ENCODE measurements at regions of chr3 and their contacts with region 1.

Region 1: GRCh38 chr3:187738331-187739093 is 6.8 kb downstream of the BCL6 start:
- DNase-seq: peak; percentile 38 to 88 (median 65)
- ATAC-seq: peak; percentile 32
- H3K4me3 ChIP-seq: peak overlapping the region; percentile 88 to 94
- H3K4me3 Mint-ChIP-seq: peak overlapping the region; percentile 94
- H3K27ac ChIP-seq: peak overlapping the region; percentile 44 to 88
- H3K27ac Mint-ChIP-seq: peak overlapping the region; percentile 100
- H3K4me1 ChIP-seq: peaks cover 15% of the 10 kb centered on the region
- H3K4me1 Mint-ChIP-seq: peaks cover 52% of the 10 kb centered on the region
- H3K27me3 ChIP-seq: no peaks in the 10 kb centered on the region
- H3K27me3 Mint-ChIP-seq: no peaks in the 10 kb centered on the region
- CTCF ChIP-seq: peak; percentile 85

Region 2: DNA sequence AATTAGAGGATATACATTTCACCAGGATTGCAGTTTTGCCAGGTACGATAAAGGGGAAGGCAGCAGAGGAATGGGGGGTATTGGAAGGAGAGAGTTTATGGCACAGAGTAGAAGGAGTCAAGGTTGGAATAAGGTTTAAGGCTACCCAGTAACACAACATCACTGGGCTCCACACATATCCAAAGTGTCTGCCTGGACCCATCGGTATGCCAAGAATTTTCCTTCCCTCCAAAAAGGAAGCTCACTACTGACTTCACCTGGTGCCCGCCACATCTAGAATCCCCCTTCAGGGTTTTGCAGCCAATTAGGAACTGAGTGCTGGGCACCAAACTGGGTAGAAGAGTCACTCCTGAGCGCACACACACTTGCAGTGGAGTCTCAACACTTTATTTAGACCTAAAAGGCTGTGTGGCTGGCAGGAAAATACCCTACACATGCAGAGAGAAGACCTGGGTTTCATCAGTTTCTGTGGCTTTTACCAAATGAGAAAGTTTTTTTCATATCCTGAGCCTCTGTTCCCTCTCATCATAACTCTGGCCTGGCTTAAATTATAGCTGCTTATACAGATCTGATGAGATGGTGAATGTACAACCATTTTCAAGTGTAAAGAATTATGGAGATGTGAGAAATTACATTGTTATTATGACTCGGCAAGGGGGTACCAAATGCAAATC is 224.6 kb after region 1 on chr3:
- CTCF ChIA-PET with region 1: interaction called, 10 read pairs
- POLR2A ChIA-PET with region 1: no interaction called
- intact Hi-C with region 1: no loop called
- DNase-seq: peak in 1 of 9 experiments; percentile 18
- ATAC-seq: no peak
- H3K4me3 ChIP-seq: no peak overlapping the region
- H3K4me3 Mint-ChIP-seq: no peak overlapping the region
- H3K27ac ChIP-seq: no peak overlapping the region
- H3K27ac Mint-ChIP-seq: no peak overlapping the region
- H3K4me1 ChIP-seq: peaks cover 22% of the 10 kb centered on the region
- H3K4me1 Mint-ChIP-seq: peaks cover 25% of the 10 kb centered on the region
- H3K27me3 ChIP-seq: no peaks in the 10 kb centered on the region
- H3K27me3 Mint-ChIP-seq: no peaks in the 10 kb centered on the region
- CTCF ChIP-seq: no peak

Region 3: GRCh38 chr3:188279502-188280335 is 541.2 kb after region 1 on chr3:
- CTCF ChIA-PET with region 1: interaction called, 6 read pairs
- POLR2A ChIA-PET with region 1: no interaction called
- intact Hi-C with region 1: loop called (anchors 2 to 5 kb)
- DNase-seq: peak in 2 of 9 experiments; percentile 10 to 21
- ATAC-seq: no peak
- H3K4me3 ChIP-seq: no peak overlapping the region
- H3K4me3 Mint-ChIP-seq: no peak overlapping the region
- H3K27ac ChIP-seq: no peak overlapping the region
- H3K27ac Mint-ChIP-seq: no peak overlapping the region
- H3K4me1 ChIP-seq: no peaks in the 10 kb centered on the region
- H3K4me1 Mint-ChIP-seq: peaks cover 18% of the 10 kb centered on the region
- H3K27me3 ChIP-seq: no peaks in the 10 kb centered on the region
- H3K27me3 Mint-ChIP-seq: no peaks in the 10 kb centered on the region
- CTCF ChIP-seq: no peak

Region 4: DNA sequence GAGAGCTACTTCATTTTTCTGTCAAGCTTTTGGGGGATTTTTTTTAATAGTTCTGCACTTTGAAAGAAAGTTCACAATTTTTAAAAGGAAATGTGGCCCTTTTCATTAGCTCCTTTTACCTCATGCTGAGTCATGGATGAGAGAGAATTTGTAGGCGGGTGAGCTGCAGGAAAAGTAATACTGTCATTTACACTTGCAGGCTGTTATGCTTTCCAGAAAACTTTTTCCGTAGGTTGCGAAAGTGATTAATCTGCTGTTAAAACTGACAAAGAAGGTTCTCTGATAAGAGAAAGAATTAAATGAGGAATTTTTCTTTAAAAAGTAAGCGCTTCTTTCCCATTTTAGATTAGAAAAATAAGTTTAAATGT is 845.6 kb after region 1 on chr3:
- CTCF ChIA-PET with region 1: no interaction called
- POLR2A ChIA-PET with region 1: no interaction called
- intact Hi-C with region 1: loop called in 1 of 2 experiments (anchors 5 kb)
- DNase-seq: peak in 1 of 9 experiments; percentile 12
- ATAC-seq: no peak
- H3K4me3 ChIP-seq: no peak overlapping the region
- H3K4me3 Mint-ChIP-seq: no peak overlapping the region
- H3K27ac ChIP-seq: no peak overlapping the region
- H3K27ac Mint-ChIP-seq: no peak overlapping the region
- H3K4me1 ChIP-seq: no peaks in the 10 kb centered on the region
- H3K4me1 Mint-ChIP-seq: peaks cover 2% of the 10 kb centered on the region
- H3K27me3 ChIP-seq: no peaks in the 10 kb centered on the region
- H3K27me3 Mint-ChIP-seq: no peaks in the 10 kb centered on the region
- CTCF ChIP-seq: no peak

Region 5: DNA sequence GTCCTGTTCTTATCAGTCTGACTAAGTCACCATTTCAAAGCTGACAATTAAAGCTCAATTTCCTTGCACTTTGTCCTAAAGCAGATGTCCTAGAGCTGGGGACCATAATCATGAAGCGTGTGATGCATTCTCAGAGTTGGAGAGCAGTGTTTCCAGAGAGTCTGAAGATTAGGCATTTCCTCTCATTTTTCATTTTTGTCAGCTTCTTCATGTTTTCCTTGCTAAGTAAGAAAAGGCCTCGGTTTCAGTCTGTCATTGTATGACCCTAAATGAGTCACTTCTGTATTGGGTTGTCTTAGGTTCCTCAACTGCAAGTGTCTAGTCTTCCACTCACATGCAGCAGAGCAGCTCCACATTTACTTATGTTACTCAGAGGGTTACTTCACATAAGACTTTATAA is 1176.0 kb after region 1 on chr3:
- CTCF ChIA-PET with region 1: interaction called, 15 read pairs
- POLR2A ChIA-PET with region 1: interaction called, 3 read pairs
- intact Hi-C with region 1: no loop called
- DNase-seq: peak in 1 of 9 experiments; percentile 5
- ATAC-seq: no peak
- H3K4me3 ChIP-seq: no peak overlapping the region
- H3K4me3 Mint-ChIP-seq: no peak overlapping the region
- H3K27ac ChIP-seq: no peak overlapping the region
- H3K27ac Mint-ChIP-seq: peak overlapping the region; percentile 15
- H3K4me1 ChIP-seq: peaks cover 23% of the 10 kb centered on the region
- H3K4me1 Mint-ChIP-seq: peaks cover 34% of the 10 kb centered on the region
- H3K27me3 ChIP-seq: no peaks in the 10 kb centered on the region
- H3K27me3 Mint-ChIP-seq: no peaks in the 10 kb centered on the region
- CTCF ChIP-seq: no peak

Region 6: DNA sequence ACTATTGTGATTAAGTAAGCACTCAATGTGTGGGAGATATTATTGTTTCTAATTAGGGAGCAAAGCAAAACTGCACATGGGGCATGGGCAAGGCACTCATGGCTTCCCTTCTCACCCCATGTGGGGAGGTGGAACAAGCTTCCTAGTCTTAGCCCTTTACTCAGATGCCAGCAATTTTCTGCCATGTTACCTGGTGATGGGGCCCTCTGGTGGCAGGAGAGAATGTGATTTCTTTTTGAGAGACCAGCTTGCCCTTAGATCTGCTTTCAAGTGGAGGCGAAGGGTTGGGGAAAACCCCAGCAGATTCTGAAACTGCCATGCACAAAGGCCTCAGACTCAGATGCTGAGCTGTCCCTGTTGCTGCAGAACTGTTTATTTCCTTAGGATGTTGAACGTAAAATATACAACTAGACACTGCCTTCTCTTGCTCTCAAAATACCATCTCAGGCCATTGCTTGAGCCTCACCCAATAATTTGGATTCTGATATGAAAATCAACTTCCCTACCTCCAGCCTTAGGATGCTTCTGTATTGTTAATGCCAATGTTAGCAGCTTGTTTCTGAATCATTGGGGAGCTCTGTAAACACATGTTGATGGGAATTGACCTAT is 1303.1 kb after region 1 on chr3:
- CTCF ChIA-PET with region 1: interaction called, 68 read pairs
- POLR2A ChIA-PET with region 1: interaction called, 21 read pairs
- intact Hi-C with region 1: loop called (anchors 1 to 2 kb)
- DNase-seq: peak; percentile 43 to 90 (median 69)
- ATAC-seq: peak; percentile 98
- H3K4me3 ChIP-seq: no peak overlapping the region
- H3K4me3 Mint-ChIP-seq: no peak overlapping the region
- H3K27ac ChIP-seq: peak overlapping the region in 1 of 2 experiments; percentile 44
- H3K27ac Mint-ChIP-seq: peak overlapping the region; percentile 72
- H3K4me1 ChIP-seq: peaks cover 3% of the 10 kb centered on the region
- H3K4me1 Mint-ChIP-seq: peaks cover 8% of the 10 kb centered on the region
- H3K27me3 ChIP-seq: no peaks in the 10 kb centered on the region
- H3K27me3 Mint-ChIP-seq: no peaks in the 10 kb centered on the region
- CTCF ChIP-seq: peak; percentile 65

Measured in CD8-positive, alpha-beta T cell (primary cell).